Activated CD4-positive, alpha-beta T cell treated with anti-CD3 and anti-CD28 coated beads for 36 hours (primary cell): ENCODE measurements at regions of chr12 and their contacts with region 1.

Region 1: GRCh38 chr12:79737875-79738718 is 47.3 kb upstream of the PAWR start:
- DNase-seq: peak; percentile 43
- ATAC-seq: peak; percentile 49
- H3K4me3 Mint-ChIP-seq: no peak overlapping the region
- H3K27ac Mint-ChIP-seq: no peak overlapping the region
- H3K4me1 Mint-ChIP-seq: no peaks in the 10 kb centered on the region
- H3K27me3 Mint-ChIP-seq: peaks cover 18% of the 10 kb centered on the region

Region 2: GRCh38 chr12:78002878-78003277 is 1735.2 kb before region 1 on chr12:
- CTCF ChIA-PET with region 1: no interaction called
- POLR2A ChIA-PET with region 1: no interaction called
- intact Hi-C with region 1: loop called in 1 of 2 experiments (anchors 5 kb)
- DNase-seq: no peak
- ATAC-seq: no peak
- H3K4me3 Mint-ChIP-seq: no peak overlapping the region
- H3K27ac Mint-ChIP-seq: no peak overlapping the region
- H3K4me1 Mint-ChIP-seq: no peaks in the 10 kb centered on the region
- H3K27me3 Mint-ChIP-seq: no peaks in the 10 kb centered on the region

Region 3: GRCh38 chr12:78146365-78146772 is 1591.7 kb before region 1 on chr12:
- CTCF ChIA-PET with region 1: no interaction called
- POLR2A ChIA-PET with region 1: no interaction called
- intact Hi-C with region 1: loop called in 1 of 2 experiments (anchors 10 kb)
- DNase-seq: no peak
- ATAC-seq: no peak
- H3K4me3 Mint-ChIP-seq: no peak overlapping the region
- H3K27ac Mint-ChIP-seq: no peak overlapping the region
- H3K4me1 Mint-ChIP-seq: no peaks in the 10 kb centered on the region
- H3K27me3 Mint-ChIP-seq: no peaks in the 10 kb centered on the region

Region 4: GRCh38 chr12:79415746-79416435 is 322.2 kb before region 1 on chr12:
- CTCF ChIA-PET with region 1: no interaction called
- POLR2A ChIA-PET with region 1: no interaction called
- intact Hi-C with region 1: loop called in 1 of 2 experiments (anchors 5 kb)
- DNase-seq: no peak
- ATAC-seq: no peak
- H3K4me3 Mint-ChIP-seq: no peak overlapping the region
- H3K27ac Mint-ChIP-seq: no peak overlapping the region
- H3K4me1 Mint-ChIP-seq: no peaks in the 10 kb centered on the region
- H3K27me3 Mint-ChIP-seq: no peaks in the 10 kb centered on the region

Region 5: GRCh38 chr12:79547735-79548609 is 190.1 kb before region 1 on chr12:
- CTCF ChIA-PET with region 1: interaction called, 3 read pairs
- POLR2A ChIA-PET with region 1: no interaction called
- intact Hi-C with region 1: loop called (anchors 1 kb)
- DNase-seq: peak; percentile 37
- ATAC-seq: no peak
- H3K4me3 Mint-ChIP-seq: no peak overlapping the region
- H3K27ac Mint-ChIP-seq: no peak overlapping the region
- H3K4me1 Mint-ChIP-seq: no peaks in the 10 kb centered on the region
- H3K27me3 Mint-ChIP-seq: no peaks in the 10 kb centered on the region

Region 6: DNA sequence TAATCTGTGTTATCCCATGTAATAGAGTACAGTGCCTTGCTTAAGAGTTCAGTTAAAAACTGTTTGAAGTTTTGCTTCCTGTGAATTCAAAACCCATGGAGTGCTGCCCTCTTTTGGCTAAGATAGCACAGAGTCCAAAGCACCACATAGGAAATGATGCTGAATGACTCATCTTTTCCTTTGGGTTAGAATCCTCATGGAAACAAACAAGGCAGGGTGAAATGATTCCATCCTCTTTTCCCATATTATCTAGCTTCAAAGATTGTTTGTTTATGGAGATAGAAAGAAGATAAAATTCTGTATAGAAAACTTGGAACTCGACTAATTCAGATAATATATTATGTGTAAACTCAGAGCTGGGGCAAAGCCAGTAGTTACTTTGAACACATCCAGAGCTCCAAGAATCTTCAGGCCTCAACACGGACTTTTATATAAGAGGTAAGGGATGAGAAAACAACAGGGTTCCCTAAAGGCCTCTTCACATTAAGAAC is 448.7 kb after region 1 on chr12:
- CTCF ChIA-PET with region 1: no interaction called
- POLR2A ChIA-PET with region 1: no interaction called
- intact Hi-C with region 1: loop called in 1 of 2 experiments (anchors 10 kb)
- DNase-seq: peak; percentile 30
- ATAC-seq: peak; percentile 85
- H3K4me3 Mint-ChIP-seq: no peak overlapping the region
- H3K27ac Mint-ChIP-seq: no peak overlapping the region
- H3K4me1 Mint-ChIP-seq: peaks cover 5% of the 10 kb centered on the region
- H3K27me3 Mint-ChIP-seq: no peaks in the 10 kb centered on the region